Endothelial cell of umbilical vein (primary cell): ENCODE measurements at regions of chr17 and their contacts with region 1.

Region 1: DNA sequence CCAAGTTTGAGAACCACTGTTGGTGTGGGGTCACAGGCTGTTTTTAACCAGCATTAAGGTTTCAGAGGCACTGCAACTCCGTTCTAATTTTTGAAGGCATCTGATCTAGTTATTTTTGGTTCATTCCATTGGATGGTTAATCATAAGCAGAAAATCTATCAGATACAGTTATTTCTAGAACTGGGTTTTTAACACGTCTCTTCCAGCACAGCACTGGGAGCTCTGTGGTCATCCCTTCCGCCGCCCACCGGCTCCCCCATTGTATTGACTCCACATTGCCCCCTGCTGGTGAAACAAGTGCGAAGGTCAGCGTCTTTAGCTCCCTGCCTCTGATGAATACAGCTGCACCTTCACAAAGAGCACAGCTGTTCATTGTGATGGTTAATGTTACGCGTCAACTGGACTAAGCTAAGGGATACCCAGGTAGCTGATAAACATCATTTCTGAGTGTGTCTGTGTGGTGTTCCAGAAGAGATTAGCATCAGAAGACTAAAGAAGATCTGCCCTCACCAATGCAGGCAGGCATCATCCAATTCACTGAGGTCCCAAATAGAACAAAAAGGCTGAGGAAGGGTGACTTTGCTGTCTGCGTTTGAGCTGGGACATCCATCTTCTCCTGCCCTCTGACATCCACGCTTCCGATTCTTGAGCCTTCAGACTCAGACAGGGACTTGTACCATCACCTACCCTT is 8.5 kb downstream of the CCL18 start:
- DNase-seq: peak; percentile 58
- H3K4me3 ChIP-seq: no peak overlapping the region
- H3K27ac ChIP-seq: no peak overlapping the region
- H3K4me1 ChIP-seq: no peaks in the 10 kb centered on the region
- H3K27me3 ChIP-seq: peaks cover 4 to 10% of the 10 kb centered on the region in 2 experiments
- CTCF ChIP-seq: peak; percentile 73 to 82
- POLR2A ChIP-seq: no peak

Region 2: DNA sequence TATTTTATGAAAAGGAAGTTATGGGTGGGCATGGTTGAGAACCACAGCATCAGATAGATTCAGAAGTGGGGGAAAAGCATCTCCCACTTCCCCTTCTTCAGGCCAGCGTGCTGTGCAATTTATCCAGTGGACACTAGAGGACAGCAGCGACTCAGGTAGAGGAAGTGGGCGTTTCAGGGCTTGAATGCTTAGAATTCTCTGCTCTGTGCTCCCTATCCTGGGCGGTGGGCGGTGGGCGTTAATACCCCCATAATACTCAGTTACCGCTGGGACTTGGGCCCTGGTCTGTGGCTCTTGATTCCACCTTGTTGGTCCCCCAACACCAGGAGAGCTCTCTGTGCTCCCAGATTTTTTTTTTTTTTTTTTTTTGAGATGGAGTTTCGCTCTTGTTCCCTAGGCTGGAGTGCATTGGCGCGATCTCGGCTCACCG is 125.4 kb before region 1 on chr17:
- CTCF ChIA-PET with region 1: interaction called, 9 read pairs
- POLR2A ChIA-PET with region 1: no interaction called
- dilution Hi-C with region 1: no loop called
- intact Hi-C with region 1: loop called (anchors 1 kb)
- DNase-seq: peak; percentile 51
- H3K4me3 ChIP-seq: no peak overlapping the region
- H3K27ac ChIP-seq: no peak overlapping the region
- H3K4me1 ChIP-seq: no peaks in the 10 kb centered on the region
- H3K27me3 ChIP-seq: peaks cover 0 to 4% of the 10 kb centered on the region in 2 experiments
- CTCF ChIP-seq: peak; percentile 64 to 82
- POLR2A ChIP-seq: no peak

Region 3: DNA sequence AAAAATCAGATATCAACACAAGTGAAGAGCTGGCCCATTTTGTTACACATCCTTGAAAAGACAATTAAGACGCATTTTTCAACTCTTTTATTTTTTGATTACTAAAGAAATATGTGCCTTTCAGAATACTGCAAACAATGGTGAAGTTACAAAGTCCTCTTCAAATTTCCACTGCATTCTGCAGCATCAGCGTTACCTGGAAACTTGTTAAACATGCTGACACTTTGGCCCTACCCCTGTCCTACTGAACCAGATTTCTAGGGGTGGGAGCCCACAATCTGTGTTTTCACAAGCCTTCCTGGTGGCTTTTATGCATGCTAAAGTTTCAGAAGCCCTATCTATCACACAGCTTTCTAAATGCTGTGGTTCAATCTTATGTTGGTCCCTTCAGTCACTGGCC is 81.5 kb before region 1 on chr17:
- CTCF ChIA-PET with region 1: interaction called, 14 read pairs
- POLR2A ChIA-PET with region 1: no interaction called
- dilution Hi-C with region 1: no loop called
- intact Hi-C with region 1: no loop called
- DNase-seq: no peak
- H3K4me3 ChIP-seq: no peak overlapping the region
- H3K27ac ChIP-seq: no peak overlapping the region
- H3K4me1 ChIP-seq: peaks cover 30% of the 10 kb centered on the region
- H3K27me3 ChIP-seq: no peaks in the 10 kb centered on the region
- CTCF ChIP-seq: no peak
- POLR2A ChIP-seq: no peak

Region 4: DNA sequence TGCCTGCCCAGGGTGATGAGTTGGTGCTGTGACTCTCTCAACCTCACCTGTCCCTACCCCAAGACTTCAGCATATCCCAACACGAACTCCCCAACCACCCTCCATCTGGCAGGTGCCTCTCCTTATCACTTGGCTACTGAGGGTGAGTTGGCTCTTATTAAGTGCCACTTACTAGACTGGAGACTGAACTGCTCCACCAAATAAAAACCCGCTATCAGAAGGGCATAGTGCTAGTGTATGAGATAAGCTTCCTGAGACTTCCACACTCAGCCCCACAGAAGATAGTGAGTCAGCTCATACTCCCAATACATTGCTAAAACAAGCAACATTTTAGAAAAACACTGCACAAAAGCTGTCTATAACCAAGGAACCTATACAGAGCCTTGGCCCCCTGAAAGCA is 24.5 kb before region 1 on chr17:
- CTCF ChIA-PET with region 1: interaction called, 13 read pairs
- POLR2A ChIA-PET with region 1: no interaction called
- dilution Hi-C with region 1: no loop called
- intact Hi-C with region 1: no loop called
- DNase-seq: no peak
- H3K4me3 ChIP-seq: no peak overlapping the region
- H3K27ac ChIP-seq: no peak overlapping the region
- H3K4me1 ChIP-seq: no peaks in the 10 kb centered on the region
- H3K27me3 ChIP-seq: peaks cover 0 to 2% of the 10 kb centered on the region in 2 experiments
- CTCF ChIP-seq: no peak
- POLR2A ChIP-seq: no peak

Region 5: DNA sequence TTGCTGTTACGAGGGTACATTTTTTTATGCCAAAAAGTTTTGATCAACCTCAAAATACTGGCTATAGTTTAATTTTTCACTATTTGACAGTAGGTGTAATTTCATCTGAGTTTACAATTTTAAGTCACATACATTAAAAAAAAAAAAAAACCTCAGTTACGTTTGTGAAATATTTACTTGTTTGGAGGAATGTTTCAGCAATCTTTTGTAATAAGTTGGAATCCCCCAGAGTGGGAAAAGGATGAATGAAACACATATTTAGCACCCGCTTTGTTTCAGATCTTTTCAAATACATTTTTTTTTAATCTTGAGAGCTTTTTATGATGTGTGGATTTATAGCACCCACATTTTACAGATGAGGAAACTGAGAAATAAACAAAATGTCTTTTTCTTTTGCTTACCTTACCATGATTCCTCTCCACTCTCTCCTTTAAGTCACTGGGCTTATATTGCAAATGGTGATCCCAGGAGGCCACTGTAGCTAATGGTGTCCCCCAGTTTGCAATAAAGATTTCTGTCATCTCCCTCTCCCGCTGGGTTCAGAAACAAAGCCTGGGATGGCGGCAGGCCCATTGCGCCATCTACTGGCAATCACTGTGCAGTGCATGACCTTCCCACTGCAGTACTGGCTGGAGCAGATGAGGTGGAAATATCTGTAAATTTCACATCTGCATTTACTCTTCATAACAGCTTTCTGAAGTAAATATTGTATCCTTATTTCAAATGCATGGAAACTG is 76.2 kb after region 1 on chr17:
- CTCF ChIA-PET with region 1: interaction called, 17 read pairs
- POLR2A ChIA-PET with region 1: no interaction called
- dilution Hi-C with region 1: no loop called
- intact Hi-C with region 1: loop called (anchors 1 kb)
- DNase-seq: peak; percentile 67
- H3K4me3 ChIP-seq: no peak overlapping the region
- H3K27ac ChIP-seq: no peak overlapping the region
- H3K4me1 ChIP-seq: no peaks in the 10 kb centered on the region
- H3K27me3 ChIP-seq: peaks cover 7 to 8% of the 10 kb centered on the region in 2 experiments
- CTCF ChIP-seq: peak; percentile 93 to 99
- POLR2A ChIP-seq: no peak